Right ventricle myocardium superior (tissue), 1 donor: ENCODE measurements at regions of chr5 and their contacts with region 1.

Region 1: GRCh38 chr5:159286420-159287035 is 23.4 kb downstream of the UBLCP1 start:
- DNase-seq: no peak
- ATAC-seq: peak; percentile 55

Region 2: DNA sequence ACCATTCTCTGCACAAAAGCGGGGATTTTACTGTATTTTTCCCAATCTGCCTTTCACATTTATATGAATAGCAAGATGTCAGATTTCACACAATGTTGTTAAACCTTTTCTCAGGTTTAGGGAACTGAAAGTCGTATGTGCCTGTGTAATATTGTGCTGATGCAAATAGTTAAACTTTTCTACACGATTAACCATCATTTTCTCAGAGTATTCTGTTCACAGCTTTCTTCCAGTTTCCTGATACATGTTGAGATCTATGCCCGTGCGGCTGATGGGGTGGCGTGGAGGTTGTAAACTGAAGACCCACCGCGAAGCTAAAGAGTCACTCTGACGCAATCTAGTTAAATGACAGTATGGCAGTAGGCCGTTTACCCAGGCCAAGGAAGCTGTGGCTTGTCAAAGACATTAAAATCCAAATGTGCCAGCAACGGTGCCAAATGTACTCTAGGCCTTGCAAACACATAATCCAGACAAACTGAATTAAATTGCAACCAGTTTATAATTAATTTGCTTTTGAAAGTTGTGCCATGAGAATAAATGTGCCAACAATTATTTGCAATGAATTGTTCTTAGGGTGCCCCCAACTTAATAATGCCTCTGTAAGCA is 332.5 kb before region 1 on chr5:
- intact Hi-C with region 1: no loop called
- DNase-seq: no peak
- ATAC-seq: no peak

Region 3: GRCh38 chr5:159987031-159987674 is 700.6 kb after region 1 on chr5:
- intact Hi-C with region 1: loop called (anchors 5 kb)
- DNase-seq: peak; percentile 87
- ATAC-seq: peak; percentile 98